ENCODE measurements at regions of chr21 and their contacts with region 1.

Region 1: GRCh38 chr21:36337099-36337509 is 17.1 kb downstream of the MORC3 start:
- DNase-seq: no peak
- H3K4me3 ChIP-seq: no peak overlapping the region
- H3K27ac ChIP-seq: no peak overlapping the region
- H3K4me1 ChIP-seq: no peaks in the 10 kb centered on the region
- H3K27me3 ChIP-seq: no peaks in the 10 kb centered on the region
- CTCF ChIP-seq: no peak
- EP300 ChIP-seq: no peak
- POLR2A ChIP-seq: no peak
- RAD21 ChIP-seq: no peak

Region 2: DNA sequence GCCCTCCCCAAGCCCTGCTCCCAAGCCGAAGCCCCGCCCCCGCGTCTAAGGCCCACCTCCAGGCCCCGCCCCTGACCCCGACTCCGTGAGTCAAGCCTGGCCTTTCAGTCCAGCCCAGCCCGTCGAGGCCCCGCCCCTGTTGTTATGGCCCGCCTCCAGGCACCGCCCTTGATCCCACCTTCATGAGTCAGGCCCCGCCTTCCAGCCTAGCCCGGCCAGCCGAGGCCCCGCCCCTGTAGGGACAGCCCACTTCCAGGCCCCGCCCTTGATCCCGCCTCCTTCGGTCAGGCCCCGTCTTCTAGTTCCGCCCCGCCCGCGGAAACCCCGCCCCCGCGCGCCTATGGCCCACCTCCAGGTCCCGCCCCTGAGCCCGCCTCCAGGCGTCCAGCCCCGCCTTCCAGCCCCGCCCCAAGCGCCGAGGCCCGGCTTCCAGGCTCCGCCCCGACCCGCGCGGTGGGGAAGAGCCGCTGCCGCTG is 180.7 kb before region 1 on chr21:
- CTCF ChIA-PET with region 1: interaction called, 10 read pairs
- POLR2A ChIA-PET with region 1: no interaction called
- DNase-seq: peak; percentile 99 to 100
- H3K4me3 ChIP-seq: peak overlapping the region; percentile 72 to 91 (median 75)
- H3K27ac ChIP-seq: no peak overlapping the region
- H3K4me1 ChIP-seq: peaks cover 0 to 5% (median 2%) of the 10 kb centered on the region in 4 experiments; a peak in 5 of 7 replicates
- H3K27me3 ChIP-seq: peaks cover 5 to 21% (median 12%) of the 10 kb centered on the region in 4 experiments; a peak in 6 of 7 replicates
- CTCF ChIP-seq: no peak
- EP300 ChIP-seq: no peak
- POLR2A ChIP-seq: no peak; a peak in 1 of 3 replicates
- RAD21 ChIP-seq: no peak

Region 3: GRCh38 chr21:36274128-36274527 is 63.0 kb before region 1 on chr21:
- CTCF ChIA-PET with region 1: no interaction called
- POLR2A ChIA-PET with region 1: no interaction called
- DNase-seq: no peak
- H3K4me3 ChIP-seq: no peak overlapping the region
- H3K27ac ChIP-seq: no peak overlapping the region
- H3K4me1 ChIP-seq: no peaks in the 10 kb centered on the region
- H3K27me3 ChIP-seq: no peaks in the 10 kb centered on the region
- CTCF ChIP-seq: no peak
- EP300 ChIP-seq: no peak
- POLR2A ChIP-seq: no peak
- RAD21 ChIP-seq: no peak

Measured in H1 (cell line).